Activated CD4-positive, alpha-beta memory T cell treated with anti-CD3 and anti-CD28 coated beads for 36 hours (primary cell): ENCODE measurements at regions of chr1 and their contacts with region 1.

Region 1: DNA sequence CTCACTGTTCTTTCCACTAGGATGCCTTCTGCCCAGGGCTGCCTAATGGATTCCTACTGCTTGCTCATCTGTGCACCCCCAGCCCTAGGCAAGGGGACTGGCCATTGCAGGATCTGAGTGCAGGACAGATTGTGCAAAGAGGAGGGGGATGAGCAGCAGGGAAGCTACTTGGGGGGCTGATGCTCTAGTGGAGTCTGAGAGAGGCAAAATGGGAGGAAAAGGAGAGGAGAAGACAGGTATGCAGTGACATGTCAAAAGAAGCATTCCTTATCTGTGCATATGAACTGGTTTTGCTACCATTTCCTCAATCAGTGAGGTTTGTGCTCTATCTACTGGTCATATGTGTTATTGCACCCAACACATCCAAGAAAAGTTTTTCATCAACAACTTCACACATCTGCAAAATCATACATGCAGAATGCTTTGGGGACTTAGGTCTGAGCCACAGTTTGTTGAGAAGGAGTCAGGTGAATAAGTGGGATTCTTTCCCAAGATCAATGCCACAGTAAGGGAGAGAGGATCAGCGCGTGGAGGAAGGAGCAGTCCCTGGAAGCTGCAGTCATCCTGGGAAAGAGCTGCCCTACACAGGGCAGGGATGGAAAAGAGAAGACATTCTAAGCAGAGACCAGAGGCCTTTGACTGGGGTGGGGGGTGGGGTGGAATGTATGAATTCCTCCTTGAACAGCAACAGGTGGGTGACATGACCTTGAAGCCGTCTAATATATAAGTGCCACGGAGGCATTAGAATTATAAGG is 14.4 kb downstream of the SLC5A9 start:
- DNase-seq: no peak
- H3K4me3 Mint-ChIP-seq: no peak overlapping the region
- H3K27ac Mint-ChIP-seq: no peak overlapping the region
- H3K4me1 Mint-ChIP-seq: no peaks in the 10 kb centered on the region
- H3K27me3 Mint-ChIP-seq: no peaks in the 10 kb centered on the region

Region 2: DNA sequence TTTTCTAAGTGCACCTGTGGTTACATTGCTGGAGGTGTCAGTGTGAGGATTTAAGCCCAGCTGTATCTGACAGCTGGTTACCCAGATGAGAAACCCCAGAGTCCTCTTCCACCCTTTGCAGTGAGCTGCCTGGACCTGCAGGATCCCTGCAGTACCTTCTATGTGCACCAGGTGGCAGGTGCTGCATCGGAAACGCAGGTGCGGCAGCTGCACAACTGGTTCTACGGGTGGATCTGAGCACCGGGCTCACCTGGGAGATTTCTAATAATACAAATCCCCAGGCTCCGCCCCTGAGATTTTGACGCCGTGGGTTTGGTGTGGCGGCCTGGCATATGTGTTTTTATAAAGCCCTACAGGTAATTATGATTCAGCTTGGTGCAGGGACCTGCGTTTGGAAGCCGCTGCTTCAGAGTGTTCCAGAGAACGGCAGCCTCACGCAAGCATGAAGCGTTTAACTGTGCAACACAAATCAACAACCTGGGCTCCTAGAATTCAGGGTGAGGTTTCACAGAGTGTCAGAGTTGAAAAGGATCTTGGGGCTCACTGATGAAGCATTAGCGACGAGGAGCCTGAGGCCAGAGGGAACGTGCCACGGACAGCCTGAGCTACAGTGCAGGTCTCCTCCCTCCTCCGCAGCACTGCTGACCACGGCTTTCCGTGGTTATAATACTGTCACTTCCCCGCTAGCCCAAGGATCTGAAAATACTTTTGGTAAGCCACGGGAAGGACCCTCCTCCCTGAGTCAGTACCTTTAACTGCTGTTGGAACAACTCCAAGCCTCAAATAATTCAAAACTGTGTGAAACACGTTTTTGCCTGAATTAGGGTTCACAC is 143.0 kb before region 1 on chr1:
- CTCF ChIA-PET with region 1: interaction called, 24 read pairs
- POLR2A ChIA-PET with region 1: no interaction called
- intact Hi-C with region 1: loop called (anchors 1 kb)
- DNase-seq: peak; percentile 82
- H3K4me3 Mint-ChIP-seq: peak overlapping the region; percentile 40
- H3K27ac Mint-ChIP-seq: no peak overlapping the region
- H3K4me1 Mint-ChIP-seq: peaks cover 7% of the 10 kb centered on the region
- H3K27me3 Mint-ChIP-seq: peaks cover 44% of the 10 kb centered on the region

Region 3: DNA sequence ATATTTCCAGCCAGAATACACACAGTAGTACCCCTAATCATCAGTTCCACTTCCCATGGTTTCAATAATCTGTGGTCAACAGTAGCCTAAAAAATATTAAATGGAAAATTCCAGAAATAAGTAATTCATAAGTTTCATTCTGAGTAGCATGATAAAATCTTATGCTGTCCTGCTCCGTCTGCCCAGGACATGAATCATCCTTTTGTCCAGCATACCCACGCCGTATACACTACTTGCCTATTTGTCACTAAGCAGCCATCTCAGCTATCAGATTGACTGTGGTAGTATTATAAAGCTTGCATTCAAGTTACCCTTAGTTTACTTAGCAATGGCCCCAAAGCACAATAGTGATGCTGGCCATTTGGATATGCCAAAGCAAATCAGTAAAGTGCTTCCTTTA is 104.3 kb after region 1 on chr1:
- CTCF ChIA-PET with region 1: no interaction called
- POLR2A ChIA-PET with region 1: no interaction called
- intact Hi-C with region 1: no loop called
- DNase-seq: no peak
- H3K4me3 Mint-ChIP-seq: no peak overlapping the region
- H3K27ac Mint-ChIP-seq: no peak overlapping the region
- H3K4me1 Mint-ChIP-seq: no peaks in the 10 kb centered on the region
- H3K27me3 Mint-ChIP-seq: no peaks in the 10 kb centered on the region

Region 4: DNA sequence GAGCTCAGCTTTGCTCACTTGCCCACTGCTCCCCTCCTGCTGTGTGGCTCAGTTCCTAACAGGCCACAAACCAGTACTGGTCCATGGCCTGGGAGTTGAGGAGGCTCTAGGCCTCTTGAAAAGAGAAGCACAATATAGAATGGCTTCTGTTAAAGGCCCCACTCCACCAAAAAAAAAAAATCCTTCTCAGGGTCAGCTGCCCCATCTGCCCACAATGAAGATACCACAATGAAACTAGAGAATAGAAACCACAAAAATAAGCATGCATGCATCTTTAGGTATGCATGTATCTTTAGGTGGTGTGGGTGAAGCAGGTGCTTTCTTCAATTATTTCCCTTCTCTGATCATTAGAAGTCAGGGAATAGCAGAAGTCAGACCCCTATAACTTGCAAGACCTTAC is 1160.2 kb after region 1 on chr1:
- CTCF ChIA-PET with region 1: no interaction called
- POLR2A ChIA-PET with region 1: no interaction called
- intact Hi-C with region 1: no loop called
- DNase-seq: no peak
- H3K4me3 Mint-ChIP-seq: no peak overlapping the region
- H3K27ac Mint-ChIP-seq: no peak overlapping the region
- H3K4me1 Mint-ChIP-seq: no peaks in the 10 kb centered on the region
- H3K27me3 Mint-ChIP-seq: no peaks in the 10 kb centered on the region